ENCODE measurements at regions of chr1 and their contacts with region 1.

Region 1: DNA sequence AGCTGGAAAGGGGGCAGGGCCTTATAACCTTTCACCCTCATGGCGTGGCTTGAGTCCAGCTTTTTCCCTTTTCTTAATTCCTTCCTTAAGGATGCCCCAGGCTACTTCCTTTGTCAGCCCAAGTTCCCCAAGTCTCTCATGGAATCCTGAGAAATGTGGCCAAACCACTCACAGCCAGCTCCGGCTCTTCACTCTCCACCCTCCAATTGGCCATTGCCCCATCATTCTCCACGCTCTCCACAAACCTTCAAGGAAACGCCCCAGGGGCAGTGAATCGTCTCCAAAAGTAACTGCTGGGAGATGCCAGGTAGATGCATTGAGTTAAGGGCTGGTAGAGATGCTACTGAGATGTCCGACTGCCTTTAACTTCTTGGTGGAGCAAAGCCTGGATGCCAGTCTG is 113.5 kb upstream of the CD34 start:
- DNase-seq: no peak
- CTCF ChIP-seq: no peak

Region 2: DNA sequence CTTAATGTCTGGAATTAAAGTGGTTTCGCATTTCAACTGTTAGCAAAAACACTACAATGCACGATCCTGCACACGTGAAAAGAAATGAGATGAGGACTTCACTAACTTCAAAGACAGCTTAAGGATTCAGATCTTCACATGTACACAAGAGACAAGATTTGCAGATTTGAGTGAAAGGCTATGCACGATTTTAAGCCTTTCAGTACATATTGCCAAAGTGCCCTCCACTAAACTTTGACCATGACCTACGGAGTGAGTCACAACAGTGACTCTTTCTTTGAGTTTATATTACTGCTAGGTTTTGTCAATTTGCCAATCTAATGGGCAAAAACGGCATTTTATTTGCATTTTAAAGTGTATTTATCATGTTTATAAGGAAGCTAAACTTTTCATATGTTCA is 420.6 kb before region 1 on chr1:
- CTCF ChIA-PET with region 1: no interaction called
- POLR2A ChIA-PET with region 1: no interaction called
- DNase-seq: no peak
- CTCF ChIP-seq: no peak

Region 3: DNA sequence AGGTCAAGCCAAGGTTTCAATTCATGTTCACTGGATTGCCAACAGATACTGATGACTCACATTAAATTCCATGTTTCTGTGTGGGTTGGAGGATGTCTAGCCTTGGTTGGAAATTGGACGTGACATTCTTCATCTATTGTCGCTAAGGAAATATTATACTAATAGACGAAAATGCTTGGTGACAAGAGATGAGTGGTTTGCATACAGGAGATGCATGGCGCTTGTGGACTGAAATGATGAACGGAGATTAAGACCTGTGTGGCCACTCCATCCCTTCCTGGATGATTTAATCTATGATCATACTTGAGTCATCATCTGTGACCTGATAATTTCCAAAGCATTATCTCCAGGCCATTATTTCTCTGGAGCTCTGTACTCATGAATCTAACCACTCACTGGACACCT is 16.5 kb before region 1 on chr1:
- CTCF ChIA-PET with region 1: interaction called, 30 read pairs
- POLR2A ChIA-PET with region 1: no interaction called
- DNase-seq: no peak
- CTCF ChIP-seq: no peak

Region 4: DNA sequence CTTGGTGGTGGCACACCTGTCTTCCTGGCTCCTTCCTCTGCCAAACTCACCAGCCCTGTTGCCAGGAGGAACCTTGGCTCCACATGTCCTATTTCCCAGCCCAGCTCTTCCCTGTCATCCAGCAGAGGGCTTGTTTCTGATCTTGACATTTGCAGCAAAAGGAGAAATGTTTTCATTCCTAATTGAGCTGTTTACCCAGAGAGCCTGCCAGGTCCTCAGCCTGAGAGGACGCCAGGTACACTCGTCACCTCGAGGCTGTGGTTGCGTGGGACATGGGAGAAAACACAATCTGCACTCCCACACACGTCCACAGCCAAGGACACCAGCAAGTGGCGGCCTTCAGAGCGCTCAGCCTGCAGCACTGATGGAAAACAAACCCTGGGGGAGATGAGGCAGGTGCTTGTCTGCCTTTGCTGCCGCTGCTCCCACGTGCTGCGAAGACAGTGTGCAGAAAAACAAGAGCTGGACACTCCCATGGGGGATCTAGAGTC is 19.3 kb after region 1 on chr1:
- CTCF ChIA-PET with region 1: interaction called, 24 read pairs
- POLR2A ChIA-PET with region 1: no interaction called
- DNase-seq: no peak
- CTCF ChIP-seq: no peak

Measured in GM10248 (cell line).